ENCODE measurements at regions of chr12 and their contacts with region 1.

Region 1: GRCh38 chr12:39103552-39104165 is 198.3 kb upstream of the CPNE8 start:
- DNase-seq: peak; percentile 83
- H3K4me3 ChIP-seq: no peak overlapping the region
- H3K27ac ChIP-seq: no peak overlapping the region
- H3K4me1 ChIP-seq: no peaks in the 10 kb centered on the region
- H3K27me3 ChIP-seq: no peaks in the 10 kb centered on the region
- CTCF ChIP-seq: peak; percentile 83

Region 2: GRCh38 chr12:38332814-38333213 is 770.8 kb before region 1 on chr12:
- CTCF ChIA-PET with region 1: no interaction called
- POLR2A ChIA-PET with region 1: no interaction called
- intact Hi-C with region 1: loop called (anchors 2 kb)
- DNase-seq: no peak
- H3K4me3 ChIP-seq: no peak overlapping the region
- H3K27ac ChIP-seq: no peak overlapping the region
- H3K4me1 ChIP-seq: no peaks in the 10 kb centered on the region
- H3K27me3 ChIP-seq: no peaks in the 10 kb centered on the region
- CTCF ChIP-seq: no peak

Region 3: GRCh38 chr12:38664661-38665269 is 438.9 kb before region 1 on chr12:
- CTCF ChIA-PET with region 1: no interaction called
- POLR2A ChIA-PET with region 1: no interaction called
- intact Hi-C with region 1: loop called (anchors 10 kb)
- DNase-seq: peak; percentile 17
- H3K4me3 ChIP-seq: no peak overlapping the region
- H3K27ac ChIP-seq: no peak overlapping the region
- H3K4me1 ChIP-seq: no peaks in the 10 kb centered on the region
- H3K27me3 ChIP-seq: no peaks in the 10 kb centered on the region
- CTCF ChIP-seq: peak; percentile 56

Region 4: GRCh38 chr12:38906482-38907170 is 197.0 kb before region 1 on chr12:
- CTCF ChIA-PET with region 1: interaction called, 8 read pairs
- POLR2A ChIA-PET with region 1: no interaction called
- intact Hi-C with region 1: loop called (anchors 1 kb)
- DNase-seq: peak; percentile 92
- H3K4me3 ChIP-seq: peak overlapping the region; percentile 43
- H3K27ac ChIP-seq: no peak overlapping the region
- H3K4me1 ChIP-seq: no peaks in the 10 kb centered on the region
- H3K27me3 ChIP-seq: peaks cover 15% of the 10 kb centered on the region
- CTCF ChIP-seq: peak; percentile 96

Region 5: GRCh38 chr12:39028382-39028781 is 75.3 kb before region 1 on chr12:
- CTCF ChIA-PET with region 1: no interaction called
- POLR2A ChIA-PET with region 1: no interaction called
- intact Hi-C with region 1: loop called (anchors 5 kb)
- DNase-seq: no peak
- H3K4me3 ChIP-seq: no peak overlapping the region
- H3K27ac ChIP-seq: no peak overlapping the region
- H3K4me1 ChIP-seq: no peaks in the 10 kb centered on the region
- H3K27me3 ChIP-seq: no peaks in the 10 kb centered on the region
- CTCF ChIP-seq: no peak

Region 6: GRCh38 chr12:39070775-39071174 is 32.9 kb before region 1 on chr12:
- CTCF ChIA-PET with region 1: no interaction called
- POLR2A ChIA-PET with region 1: no interaction called
- intact Hi-C with region 1: loop called (anchors 5 kb)
- DNase-seq: no peak
- H3K4me3 ChIP-seq: no peak overlapping the region
- H3K27ac ChIP-seq: no peak overlapping the region
- H3K4me1 ChIP-seq: no peaks in the 10 kb centered on the region
- H3K27me3 ChIP-seq: no peaks in the 10 kb centered on the region
- CTCF ChIP-seq: no peak

Region 7: GRCh38 chr12:39081910-39082309 is 21.7 kb before region 1 on chr12:
- CTCF ChIA-PET with region 1: no interaction called
- POLR2A ChIA-PET with region 1: no interaction called
- intact Hi-C with region 1: no loop called
- DNase-seq: no peak
- H3K4me3 ChIP-seq: no peak overlapping the region
- H3K27ac ChIP-seq: no peak overlapping the region
- H3K4me1 ChIP-seq: no peaks in the 10 kb centered on the region
- H3K27me3 ChIP-seq: no peaks in the 10 kb centered on the region
- CTCF ChIP-seq: no peak

Region 8: DNA sequence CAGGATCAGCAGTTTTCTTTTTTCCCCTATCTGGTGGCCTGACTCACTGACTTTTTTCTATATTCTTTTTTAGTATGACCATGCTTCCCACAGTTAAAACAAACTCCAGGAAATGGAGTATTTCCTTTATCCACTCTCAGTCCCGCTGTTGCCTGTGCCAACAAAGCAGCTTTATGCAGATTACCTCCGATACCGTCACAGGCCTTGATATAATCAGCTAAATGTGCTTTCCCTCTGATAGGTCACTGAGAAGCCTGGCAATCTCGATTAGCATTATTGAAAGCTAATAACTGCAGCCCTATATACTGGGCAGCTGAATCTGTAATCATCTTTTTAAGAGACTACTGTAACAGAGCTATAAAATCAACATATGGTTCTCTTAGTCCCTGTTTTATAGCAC is 95.7 kb after region 1 on chr12:
- CTCF ChIA-PET with region 1: no interaction called
- POLR2A ChIA-PET with region 1: no interaction called
- intact Hi-C with region 1: no loop called
- DNase-seq: peak; percentile 94
- H3K4me3 ChIP-seq: peak overlapping the region; percentile 6
- H3K27ac ChIP-seq: peak overlapping the region; percentile 83
- H3K4me1 ChIP-seq: peaks cover 10% of the 10 kb centered on the region
- H3K27me3 ChIP-seq: no peaks in the 10 kb centered on the region
- CTCF ChIP-seq: no peak

Region 9: DNA sequence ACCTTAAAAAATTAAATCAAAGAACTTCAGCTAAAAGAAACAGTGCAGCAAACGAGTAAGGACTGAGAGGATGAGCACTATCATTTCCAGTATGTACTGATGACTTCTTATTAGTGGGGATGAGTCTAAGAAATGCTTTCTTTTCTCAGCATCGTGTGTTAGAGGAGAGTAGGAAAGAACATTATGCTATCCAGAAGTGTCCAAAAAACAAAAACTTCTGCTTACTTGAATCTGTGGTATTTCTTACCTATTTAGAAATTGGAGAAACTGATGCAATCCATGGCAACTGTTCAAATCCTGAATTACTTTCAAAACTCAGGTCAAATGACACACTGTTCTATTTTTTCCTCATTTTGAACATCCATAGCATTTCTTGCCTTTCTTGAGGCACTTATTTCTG is 492.3 kb after region 1 on chr12:
- CTCF ChIA-PET with region 1: no interaction called
- POLR2A ChIA-PET with region 1: no interaction called
- intact Hi-C with region 1: no loop called
- DNase-seq: no peak
- H3K4me3 ChIP-seq: no peak overlapping the region
- H3K27ac ChIP-seq: no peak overlapping the region
- H3K4me1 ChIP-seq: peaks cover 4% of the 10 kb centered on the region
- H3K27me3 ChIP-seq: no peaks in the 10 kb centered on the region
- CTCF ChIP-seq: no peak